ENCODE measurements at regions of chr18 and their contacts with region 1.

Region 1: DNA sequence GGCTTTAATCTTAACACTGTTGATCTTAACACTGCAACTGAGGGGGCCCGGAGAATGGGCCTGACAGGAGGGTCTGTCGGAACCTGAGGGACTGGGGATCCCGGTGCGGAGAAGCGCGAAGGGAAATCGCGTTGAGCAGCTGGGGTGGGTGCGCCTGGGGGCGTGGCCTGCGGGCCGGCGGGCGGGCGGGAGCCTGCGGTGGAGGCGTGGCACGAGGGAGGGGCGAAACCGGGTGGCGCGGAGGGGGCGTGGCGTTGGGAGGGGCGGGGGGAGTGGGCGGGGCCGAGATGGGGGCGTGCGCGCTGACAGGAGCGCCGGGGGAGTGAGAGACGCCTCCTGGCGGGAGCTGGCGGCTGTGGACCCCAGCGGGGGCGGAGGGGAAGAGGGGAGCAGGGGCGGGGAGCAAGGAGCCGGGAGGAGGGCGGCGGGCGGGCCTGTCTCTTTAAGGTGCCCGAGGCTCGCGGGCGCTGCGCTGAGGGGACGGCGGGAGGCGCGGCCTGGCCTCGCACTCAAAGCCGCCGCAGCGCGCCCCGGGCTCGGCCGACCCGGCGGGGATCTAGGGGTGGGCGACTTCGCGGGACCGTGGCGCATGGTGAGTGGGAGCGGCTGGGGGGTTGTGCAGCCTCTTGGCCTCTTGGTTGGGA is at the start of gene TWSG1:
- DNase-seq: peak; percentile 91
- H3K4me3 Mint-ChIP-seq: peak within 1 kb of the TSS; percentile 79
- H3K27ac Mint-ChIP-seq: no peak within 1 kb of the TSS
- H3K4me1 Mint-ChIP-seq: peaks cover 13% of the 10 kb centered on the region
- H3K27me3 Mint-ChIP-seq: peaks cover 2% of the 10 kb centered on the region
- total RNA-seq, gene TWSG1: 4.9 to 5.6 TPM

Region 2: GRCh38 chr18:9017170-9017904 is 317.1 kb before region 1 on chr18:
- CTCF ChIA-PET with region 1: no interaction called
- intact Hi-C with region 1: loop called (anchors 2 kb)
- DNase-seq: peak; percentile 84
- H3K4me3 Mint-ChIP-seq: peak overlapping the region; percentile 56
- H3K27ac Mint-ChIP-seq: no peak overlapping the region
- H3K4me1 Mint-ChIP-seq: peaks cover 14% of the 10 kb centered on the region
- H3K27me3 Mint-ChIP-seq: peaks cover 8% of the 10 kb centered on the region

Region 3: GRCh38 chr18:9102508-9103375 is 231.7 kb before region 1 on chr18 and contains the start of gene NDUFV2:
- CTCF ChIA-PET with region 1: no interaction called
- intact Hi-C with region 1: loop called (anchors 1 kb)
- DNase-seq: peak; percentile 98
- H3K4me3 Mint-ChIP-seq: peak within 1 kb of the TSS; percentile 81
- H3K27ac Mint-ChIP-seq: peak within 1 kb of the TSS; percentile 95
- H3K4me1 Mint-ChIP-seq: peaks cover 43% of the 10 kb centered on the region
- H3K27me3 Mint-ChIP-seq: no peaks in the 10 kb centered on the region
- total RNA-seq, gene NDUFV2: 290 to 303 TPM

Region 4: DNA sequence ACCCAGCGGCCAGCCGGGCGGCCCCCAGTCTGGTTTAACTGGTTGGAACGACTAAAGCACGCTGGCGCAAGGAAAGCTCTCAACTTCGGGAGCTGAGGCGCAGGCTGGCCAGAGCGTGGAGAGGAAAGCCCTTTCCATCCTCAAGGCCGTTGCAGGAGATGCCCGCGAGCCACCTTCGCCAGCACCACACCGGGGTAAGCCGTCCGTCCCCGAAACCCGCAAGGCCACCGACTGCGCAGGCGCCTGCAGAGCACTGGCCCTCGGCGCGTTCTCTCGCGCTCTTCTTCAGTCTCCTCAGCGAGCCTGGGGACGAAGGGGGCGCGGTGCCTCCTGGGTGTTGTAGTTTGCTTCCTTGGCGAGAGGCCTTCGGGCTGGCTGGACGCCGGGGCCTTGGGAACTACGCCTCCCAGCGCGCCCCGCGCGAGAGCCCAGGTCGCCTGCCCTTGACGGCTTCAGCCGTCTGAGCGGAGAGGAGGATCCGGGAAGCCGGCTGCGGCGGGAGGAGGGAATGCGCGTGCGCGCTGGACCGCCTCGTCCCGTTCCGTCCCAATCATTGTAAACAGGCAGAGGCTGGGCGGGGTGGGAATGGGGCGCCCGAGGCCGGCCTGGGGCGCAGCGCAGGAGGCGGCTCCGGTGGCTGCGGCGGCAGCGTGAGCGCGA is 140.7 kb after region 1 on chr18 and contains the start of gene RALBP1:
- CTCF ChIA-PET with region 1: interaction called, 4 read pairs
- intact Hi-C with region 1: loop called (anchors 1 kb)
- DNase-seq: peak; percentile 99
- H3K4me3 Mint-ChIP-seq: peak within 1 kb of the TSS; percentile 89
- H3K27ac Mint-ChIP-seq: peak within 1 kb of the TSS; percentile 90
- H3K4me1 Mint-ChIP-seq: peaks cover 26% of the 10 kb centered on the region
- H3K27me3 Mint-ChIP-seq: peaks cover 3% of the 10 kb centered on the region
- total RNA-seq, gene RALBP1: 46.9 to 51.1 TPM

Region 5: GRCh38 chr18:9913526-9914333 is 579.3 kb after region 1 on chr18 and contains the start of gene VAPA:
- CTCF ChIA-PET with region 1: no interaction called
- intact Hi-C with region 1: loop called (anchors 2 kb)
- DNase-seq: peak; percentile 93
- H3K4me3 Mint-ChIP-seq: peak within 1 kb of the TSS; percentile 91
- H3K27ac Mint-ChIP-seq: peak within 1 kb of the TSS; percentile 93
- H3K4me1 Mint-ChIP-seq: peaks cover 25% of the 10 kb centered on the region
- H3K27me3 Mint-ChIP-seq: no peaks in the 10 kb centered on the region
- total RNA-seq, gene VAPA: 150 to 159 TPM